ENCODE measurements at regions of chr6 and their contacts with region 1.

Region 1: GRCh38 chr6:70221025-70221714 is 81.7 kb downstream of the COL9A1 start:
- DNase-seq: peak; percentile 47 to 58
- H3K4me3 ChIP-seq: no peak overlapping the region
- H3K4me1 ChIP-seq: no peaks in the 10 kb centered on the region; the same call in 1 of the 2 replicates
- H3K27me3 ChIP-seq: no peaks in the 10 kb centered on the region; the same call in 1 of the 2 replicates

Region 2: DNA sequence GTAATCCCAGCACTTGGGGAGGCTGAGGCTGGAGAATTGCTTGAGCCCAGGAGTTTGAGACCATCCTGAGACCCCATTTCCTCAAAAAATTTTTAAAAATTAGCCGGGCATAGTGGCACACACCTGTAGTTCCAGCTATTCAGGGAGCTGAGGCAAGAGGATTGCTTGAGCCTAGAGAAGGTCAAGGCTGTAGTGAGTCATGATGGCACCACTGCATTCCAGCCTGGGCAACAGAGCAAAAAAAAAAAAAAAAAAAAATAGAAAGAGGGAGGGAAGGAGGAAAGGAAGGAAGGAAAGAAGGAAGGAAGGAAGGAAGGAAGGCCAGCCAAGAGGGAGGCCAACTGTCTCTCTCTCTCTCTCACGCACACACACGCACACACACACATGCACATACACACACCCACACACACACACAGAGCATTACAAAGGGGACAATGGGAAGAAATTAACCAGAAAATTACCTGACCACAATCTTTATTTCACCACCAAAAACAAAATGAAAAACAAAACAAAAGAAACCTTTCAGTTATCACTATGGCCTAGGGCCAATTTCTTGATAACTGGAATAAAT is 132.3 kb after region 1 on chr6:
- in situ Hi-C with region 1: no loop called
- DNase-seq: no peak
- H3K4me3 ChIP-seq: no peak overlapping the region
- H3K4me1 ChIP-seq: no peaks in the 10 kb centered on the region; the same call in 1 of the 2 replicates
- H3K27me3 ChIP-seq: no peaks in the 10 kb centered on the region

Region 3: DNA sequence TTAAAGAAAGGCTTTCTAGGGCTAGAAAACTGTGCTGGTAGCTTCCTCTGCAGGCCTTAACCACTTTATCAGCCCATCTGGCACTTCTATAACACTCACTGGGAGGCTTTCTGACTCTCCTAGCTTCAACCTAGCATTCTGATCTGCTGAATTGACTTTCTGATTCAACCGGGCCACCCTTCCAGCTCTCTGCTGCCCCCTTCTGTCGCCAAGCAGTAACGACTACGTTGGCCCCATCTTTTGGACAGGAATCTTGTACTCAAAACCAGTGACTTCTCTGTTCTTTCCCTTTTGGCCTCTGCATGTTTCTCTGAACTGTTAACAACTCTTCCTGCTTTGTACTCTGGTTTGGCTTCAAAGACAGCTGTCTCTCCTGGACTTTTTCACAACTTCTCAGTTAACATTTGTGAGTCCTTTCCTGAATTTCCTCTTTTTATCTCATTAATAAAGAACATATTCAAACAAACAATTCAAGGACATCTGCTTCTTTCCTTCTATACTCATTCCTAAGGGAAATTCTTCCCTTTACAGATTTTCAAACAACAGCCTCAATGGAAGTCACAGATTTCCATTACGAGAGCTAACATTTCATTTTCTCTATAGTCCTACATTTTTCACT is 148.3 kb after region 1 on chr6:
- in situ Hi-C with region 1: loop called (anchors 10 kb)
- DNase-seq: peak; percentile 63 to 84
- H3K4me3 ChIP-seq: no peak overlapping the region
- H3K4me1 ChIP-seq: peaks cover 13% of the 10 kb centered on the region
- H3K27me3 ChIP-seq: peaks cover 12% of the 10 kb centered on the region

Region 4: GRCh38 chr6:70686548-70687133 is 465.5 kb after region 1 on chr6:
- in situ Hi-C with region 1: loop called (anchors 25 kb)
- DNase-seq: peak; percentile 24 to 61
- H3K4me3 ChIP-seq: no peak overlapping the region
- H3K4me1 ChIP-seq: peaks cover 7% of the 10 kb centered on the region
- H3K27me3 ChIP-seq: no peaks in the 10 kb centered on the region